Activated naive CD4-positive, alpha-beta T cell treated with anti-CD3 and anti-CD28 coated beads for 36 hours (primary cell): ENCODE measurements at regions of chr4 and their contacts with region 1.

Region 1: GRCh38 chr4:98482847-98483806 is 175.3 kb downstream of the TSPAN5 start:
- DNase-seq: peak; percentile 74
- H3K4me3 Mint-ChIP-seq: peak overlapping the region; percentile 45
- H3K27ac Mint-ChIP-seq: peak overlapping the region; percentile 94
- H3K4me1 Mint-ChIP-seq: peaks cover 78% of the 10 kb centered on the region
- H3K27me3 Mint-ChIP-seq: no peaks in the 10 kb centered on the region

Region 2: DNA sequence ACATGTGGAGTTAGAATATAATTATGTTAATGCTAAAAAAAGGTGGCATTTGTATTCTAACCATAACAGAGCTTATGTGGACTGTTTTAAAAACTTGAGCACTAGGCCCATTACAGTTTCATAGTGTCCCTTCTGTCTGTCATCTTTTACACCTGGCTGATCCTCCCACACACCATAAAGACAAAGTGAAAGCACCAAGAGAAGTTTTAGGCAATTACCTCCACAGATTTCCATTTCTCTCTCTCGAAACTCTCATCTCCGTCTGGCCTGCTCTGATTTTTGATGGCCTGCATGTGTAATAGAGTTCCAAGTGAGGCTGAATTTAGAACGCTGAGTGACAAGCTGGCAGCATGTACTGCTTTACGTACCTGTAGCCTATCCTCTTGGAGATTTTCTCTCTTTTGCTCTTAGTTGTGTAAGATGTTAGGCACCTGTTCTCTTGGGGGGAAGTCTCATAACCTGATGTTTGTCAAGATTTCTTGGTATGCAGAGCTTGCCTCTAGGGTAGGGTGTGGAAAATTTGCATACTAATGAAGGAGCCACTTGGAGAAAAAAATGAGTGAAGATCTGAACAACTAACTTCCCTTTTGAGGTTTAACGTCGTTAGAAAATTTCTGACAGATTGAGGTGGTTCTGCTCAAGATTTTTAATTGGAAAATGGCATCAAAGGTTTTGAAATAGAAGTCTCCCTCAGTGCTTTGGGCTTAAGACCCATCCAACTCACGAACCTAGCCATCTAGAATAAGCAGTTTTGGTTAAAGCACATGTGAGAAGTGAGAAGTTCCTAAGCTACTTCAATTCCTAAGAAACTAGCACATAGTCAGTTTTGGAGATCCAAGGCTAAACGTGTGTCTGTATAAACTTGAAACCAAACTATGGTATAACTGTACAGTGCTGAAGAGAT is 279.5 kb before region 1 on chr4:
- CTCF ChIA-PET with region 1: no interaction called
- intact Hi-C with region 1: no loop called
- DNase-seq: no peak
- H3K4me3 Mint-ChIP-seq: no peak overlapping the region
- H3K27ac Mint-ChIP-seq: no peak overlapping the region
- H3K4me1 Mint-ChIP-seq: peaks cover 9% of the 10 kb centered on the region
- H3K27me3 Mint-ChIP-seq: no peaks in the 10 kb centered on the region

Region 3: DNA sequence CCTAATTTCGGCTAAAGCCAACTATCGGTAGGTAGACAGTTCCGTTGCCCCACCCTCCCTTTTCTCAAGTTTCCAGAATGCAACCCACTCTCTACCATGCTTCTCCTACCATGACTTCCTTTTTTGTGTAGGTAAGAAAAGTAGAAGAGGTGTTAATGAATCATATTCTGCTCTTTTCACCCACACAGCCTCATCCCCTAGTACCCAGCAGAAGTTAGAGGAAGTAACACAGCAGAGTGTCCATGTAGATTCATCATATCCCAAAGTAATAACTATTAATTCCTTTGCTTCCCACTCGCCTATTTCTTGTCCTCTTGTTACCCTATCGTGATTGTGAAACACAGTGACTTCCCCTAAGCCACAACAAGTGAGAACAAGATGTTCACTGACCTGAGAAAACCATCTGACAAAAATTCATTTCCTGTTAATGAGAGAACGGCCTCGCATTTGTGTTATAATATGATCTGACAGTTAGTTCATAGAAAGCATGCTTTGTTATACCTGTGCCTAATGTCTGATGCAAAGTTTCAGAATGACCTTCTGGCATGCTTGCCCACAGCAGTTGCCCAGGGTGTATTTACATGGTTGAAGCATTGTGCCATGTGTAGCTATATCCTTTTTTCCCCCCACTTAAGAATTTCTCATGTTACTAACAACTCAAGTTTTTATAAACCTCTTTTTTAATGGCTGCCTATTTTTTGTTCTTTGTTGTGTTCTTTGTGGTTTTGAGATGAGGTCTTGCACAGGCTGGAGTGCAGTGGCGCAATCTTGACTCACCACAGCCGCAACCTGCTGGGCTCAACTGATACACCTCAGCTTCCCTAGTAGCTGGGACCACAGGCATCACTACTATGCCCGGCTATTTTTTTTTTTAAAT is 36.4 kb before region 1 on chr4:
- CTCF ChIA-PET with region 1: no interaction called
- intact Hi-C with region 1: loop called (anchors 1 kb)
- DNase-seq: peak; percentile 72
- H3K4me3 Mint-ChIP-seq: peak overlapping the region; percentile 48
- H3K27ac Mint-ChIP-seq: peak overlapping the region; percentile 76
- H3K4me1 Mint-ChIP-seq: peaks cover 31% of the 10 kb centered on the region
- H3K27me3 Mint-ChIP-seq: no peaks in the 10 kb centered on the region

Region 4: GRCh38 chr4:98493296-98493695 is 10.2 kb after region 1 on chr4:
- CTCF ChIA-PET with region 1: no interaction called
- intact Hi-C with region 1: loop called (anchors 1 kb)
- DNase-seq: no peak
- H3K4me3 Mint-ChIP-seq: no peak overlapping the region
- H3K27ac Mint-ChIP-seq: no peak overlapping the region
- H3K4me1 Mint-ChIP-seq: peaks cover 21% of the 10 kb centered on the region
- H3K27me3 Mint-ChIP-seq: no peaks in the 10 kb centered on the region

Region 5: DNA sequence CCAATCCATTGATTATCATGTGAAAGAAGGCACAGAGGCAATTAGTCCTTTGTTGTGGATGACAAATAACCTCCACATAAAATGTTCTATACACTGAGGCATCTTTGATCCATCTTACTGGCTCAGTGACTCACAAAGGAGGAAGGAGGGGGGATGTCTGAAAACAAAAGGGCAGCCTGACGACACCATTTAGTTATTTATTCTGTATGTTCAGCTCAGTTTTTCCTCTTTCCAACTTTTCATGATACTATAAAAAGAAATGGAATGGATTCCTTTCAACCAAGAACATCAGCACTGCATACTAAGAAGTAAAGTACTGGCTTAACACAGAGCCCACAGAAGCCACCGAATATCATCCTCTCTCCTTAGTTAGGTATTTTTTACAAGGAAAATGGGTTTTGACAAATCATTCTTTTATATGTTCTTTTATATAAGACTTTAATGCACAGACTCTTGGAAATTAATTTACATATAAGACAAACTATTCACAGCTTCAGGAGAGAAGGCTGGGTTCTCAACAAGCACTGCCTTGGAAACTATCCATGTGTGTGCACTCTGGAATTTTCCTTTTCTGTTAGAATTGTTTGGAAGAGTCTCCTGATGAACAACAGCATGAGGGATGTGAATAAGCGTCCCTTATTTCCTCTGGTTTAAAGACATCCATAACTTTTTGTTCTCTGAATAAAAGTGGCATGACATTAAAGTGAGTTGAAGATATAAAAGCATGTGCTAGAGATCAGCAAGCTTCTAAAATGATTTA is 39.7 kb after region 1 on chr4:
- CTCF ChIA-PET with region 1: interaction called, 4 read pairs
- intact Hi-C with region 1: loop called (anchors 1 kb)
- DNase-seq: peak; percentile 35
- H3K4me3 Mint-ChIP-seq: no peak overlapping the region
- H3K27ac Mint-ChIP-seq: peak overlapping the region; percentile 14
- H3K4me1 Mint-ChIP-seq: peaks cover 49% of the 10 kb centered on the region
- H3K27me3 Mint-ChIP-seq: no peaks in the 10 kb centered on the region

Region 6: DNA sequence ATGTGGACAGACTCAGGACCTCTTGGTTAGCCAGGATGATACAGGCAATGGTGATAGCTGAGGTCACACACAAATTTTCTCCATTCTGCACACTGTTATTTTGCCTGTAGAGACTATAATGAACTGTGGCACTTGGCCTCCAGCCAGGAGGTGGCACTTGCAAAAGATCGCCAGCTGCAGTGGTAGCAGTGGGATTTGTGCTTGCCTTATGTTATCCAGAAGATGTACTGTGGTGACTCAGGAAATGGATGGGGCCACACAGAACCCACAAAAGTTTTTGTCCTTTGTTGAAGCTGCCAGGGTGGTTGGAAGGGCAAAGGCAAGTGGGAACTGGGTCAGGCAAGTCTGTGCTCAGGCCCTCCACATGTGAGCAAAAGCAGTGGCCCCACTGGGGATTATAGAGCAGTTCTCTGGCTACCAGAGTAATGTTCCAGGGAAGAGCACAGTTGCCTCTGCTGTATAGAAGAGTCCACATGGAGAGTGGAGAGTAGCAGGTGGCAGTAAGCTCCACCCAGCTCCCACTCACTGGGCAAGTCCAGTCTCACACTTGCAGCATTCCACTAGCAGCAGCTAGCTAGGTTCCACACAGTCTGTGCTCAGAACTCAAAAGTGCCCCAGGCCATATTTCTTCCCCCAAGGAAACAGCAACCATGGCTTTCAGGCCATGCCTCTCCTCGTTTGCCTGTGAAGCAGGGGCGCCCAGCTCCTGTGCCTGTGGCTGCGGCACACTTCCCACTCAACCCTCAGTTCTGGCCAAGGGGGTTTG is 1021.9 kb after region 1 on chr4:
- CTCF ChIA-PET with region 1: no interaction called
- intact Hi-C with region 1: loop called (anchors 5 kb)
- DNase-seq: no peak
- H3K4me3 Mint-ChIP-seq: no peak overlapping the region
- H3K27ac Mint-ChIP-seq: no peak overlapping the region
- H3K4me1 Mint-ChIP-seq: peaks cover 49% of the 10 kb centered on the region
- H3K27me3 Mint-ChIP-seq: no peaks in the 10 kb centered on the region